ENCODE measurements at regions of chr7 and their contacts with region 1.

Region 1: DNA sequence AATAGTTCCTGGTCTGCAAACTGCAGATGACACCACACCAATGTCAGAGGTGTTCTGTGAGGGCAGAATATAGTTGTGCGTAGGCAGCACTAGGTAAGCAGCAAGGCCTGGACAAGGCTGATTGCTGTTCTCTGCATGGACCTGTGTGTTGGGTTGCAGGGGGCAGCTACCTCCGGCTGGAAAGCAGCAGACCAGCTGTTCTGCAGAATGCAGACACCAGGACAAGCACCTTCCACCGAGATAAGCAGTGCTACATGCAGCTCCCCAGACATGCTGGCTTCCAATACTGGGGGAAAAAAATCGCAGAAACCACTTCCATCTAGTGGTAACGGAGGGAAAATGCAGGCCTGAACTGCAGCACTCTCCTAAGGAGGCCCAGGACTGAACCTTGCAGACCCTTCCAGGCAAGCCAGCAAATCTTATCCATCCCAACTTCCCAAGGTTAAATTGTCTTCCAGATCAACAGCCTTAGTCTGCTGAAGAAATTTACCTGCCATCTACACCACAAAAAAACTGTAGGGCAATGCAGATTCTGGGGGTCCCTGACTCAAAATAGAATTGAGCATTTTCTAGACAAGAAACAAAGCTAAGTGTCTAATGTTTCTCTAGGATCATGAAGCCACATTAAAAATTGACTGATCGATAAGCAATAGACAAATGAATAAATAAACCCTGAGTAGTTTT is 50.5 kb upstream of the COBL start:
- DNase-seq: no peak
- ATAC-seq: peak; percentile 88 to 90

Region 2: DNA sequence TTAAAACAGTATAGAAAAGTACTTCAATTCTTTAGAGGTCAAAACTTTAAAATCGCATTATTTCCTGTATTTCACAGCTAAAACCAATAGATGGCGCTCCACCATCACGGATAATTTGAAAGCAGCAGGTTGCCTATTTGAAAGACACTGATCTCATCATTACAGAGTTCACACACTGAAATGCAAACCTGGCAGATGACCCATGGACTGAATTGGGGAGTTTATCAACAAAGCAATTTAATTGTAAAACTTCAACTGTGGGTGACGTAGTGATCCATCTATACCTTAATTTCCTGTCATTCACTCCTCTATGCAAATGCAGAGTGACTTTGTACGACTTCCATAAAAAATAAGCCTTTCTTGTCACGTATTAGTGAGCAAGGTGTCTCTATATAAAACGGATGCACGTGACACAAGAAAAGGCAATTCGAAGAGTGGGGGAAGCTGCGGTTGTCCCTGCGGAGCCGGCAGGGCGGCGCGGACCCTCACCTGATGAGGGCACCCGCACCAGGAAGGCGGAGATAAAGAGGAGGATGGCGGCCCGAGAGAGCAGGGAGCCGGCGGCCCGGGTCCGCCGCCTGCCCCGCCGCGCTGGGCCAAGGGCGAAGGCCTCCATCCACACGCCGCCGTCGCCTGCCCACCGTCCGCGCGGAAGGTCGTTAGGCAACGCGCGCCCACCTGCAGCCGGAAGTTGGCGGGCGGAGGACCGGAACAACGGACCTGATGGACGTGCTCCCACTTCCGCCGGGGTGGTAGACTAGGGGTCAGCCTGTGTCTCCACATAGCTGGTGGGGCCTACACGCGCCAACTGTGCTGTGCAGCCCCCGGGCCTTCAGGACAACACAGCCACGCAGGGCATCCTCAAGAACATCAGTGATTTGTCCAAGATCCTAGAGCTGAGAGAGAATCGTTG is 1274.2 kb before region 1 on chr7 and contains the start of gene ZPBP:
- intact Hi-C with region 1: loop called in 1 of 2 experiments (anchors 5 kb)
- DNase-seq: peak; percentile 22
- ATAC-seq: peak; percentile 71 to 76
- total RNA-seq, gene ZPBP: not detected

Region 3: GRCh38 chr7:51255536-51256208 is 111.4 kb before region 1 on chr7:
- intact Hi-C with region 1: loop called in 1 of 2 experiments (anchors 10 kb)
- DNase-seq: no peak
- ATAC-seq: peak; percentile 35 to 77

Region 4: DNA sequence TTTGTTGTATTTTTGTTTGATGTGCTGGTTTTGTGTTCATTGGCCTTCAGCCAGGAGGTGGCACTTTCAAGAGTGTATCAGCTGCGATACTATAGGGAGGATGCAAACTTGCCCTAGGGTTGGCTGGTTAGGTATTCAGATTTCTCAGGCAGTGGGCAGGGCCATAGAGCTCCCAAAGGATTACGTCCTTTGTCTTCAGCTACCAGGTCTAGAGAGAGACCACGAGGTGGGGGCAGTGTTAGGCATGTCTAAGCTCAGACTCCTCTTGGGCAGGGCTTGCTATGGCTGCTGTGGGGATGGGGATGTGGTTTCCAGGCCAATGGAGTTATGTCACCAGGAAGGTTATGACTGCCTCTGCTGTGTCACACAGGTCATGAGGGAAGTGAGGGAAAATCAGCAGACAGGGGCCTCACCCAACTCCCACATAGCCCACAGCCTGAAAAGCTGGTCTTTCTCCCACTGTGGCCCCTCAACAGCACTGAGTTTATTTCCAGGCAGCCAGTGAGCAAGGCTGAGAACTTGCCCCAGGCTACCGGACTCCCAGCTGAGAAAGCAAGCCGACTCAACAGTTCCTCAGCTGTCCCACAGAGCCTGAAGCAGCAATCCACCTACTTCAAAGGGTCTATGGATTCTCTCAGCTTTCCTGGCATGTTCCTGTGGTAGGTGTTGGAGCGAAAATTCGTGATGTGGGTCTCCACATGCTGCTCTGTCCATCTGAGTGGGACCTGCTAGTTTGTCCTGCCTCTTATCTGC is 176.9 kb after region 1 on chr7:
- intact Hi-C with region 1: no loop called
- DNase-seq: no peak
- ATAC-seq: no peak